Activated naive CD4-positive, alpha-beta T cell treated with anti-CD3 and anti-CD28 coated beads for 36 hours (primary cell): ENCODE measurements at regions of chr11 and their contacts with region 1.

Region 1: GRCh38 chr11:119741369-119742262 is 12.6 kb upstream of the NECTIN1 start:
- DNase-seq: peak; percentile 64
- H3K4me3 Mint-ChIP-seq: peak overlapping the region; percentile 30
- H3K27ac Mint-ChIP-seq: no peak overlapping the region
- H3K4me1 Mint-ChIP-seq: peaks cover 11% of the 10 kb centered on the region
- H3K27me3 Mint-ChIP-seq: peaks cover 39% of the 10 kb centered on the region

Region 2: DNA sequence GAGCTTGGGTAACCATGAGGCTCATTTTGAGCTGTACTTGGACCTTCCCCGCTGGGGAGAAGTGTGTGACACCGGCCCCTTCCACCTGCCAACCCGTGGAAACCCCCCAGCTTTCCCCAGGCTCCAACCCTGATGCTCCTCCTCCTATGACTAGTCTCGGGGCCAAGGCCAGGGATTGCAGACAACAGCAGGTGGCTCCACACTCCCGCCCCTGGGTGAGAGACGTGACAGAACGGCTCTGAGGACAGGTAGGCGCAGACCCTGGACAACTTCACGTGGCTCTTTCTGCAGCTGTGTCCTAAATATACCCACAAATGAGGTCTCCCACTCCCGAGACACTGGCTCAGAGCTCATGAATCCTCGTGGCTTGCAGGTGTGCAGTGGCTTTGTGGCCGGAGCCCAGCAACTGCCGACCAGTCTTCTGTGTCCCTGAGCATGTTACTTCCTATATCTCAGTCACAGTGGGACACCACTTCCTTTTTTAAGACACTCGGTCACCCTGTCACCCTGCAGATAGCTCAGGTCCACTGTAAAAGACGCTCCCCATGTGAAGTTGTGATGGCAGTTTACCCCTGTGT is 67.8 kb before region 1 on chr11:
- CTCF ChIA-PET with region 1: interaction called, 3 read pairs
- intact Hi-C with region 1: loop called (anchors 1 kb)
- DNase-seq: peak; percentile 87
- H3K4me3 Mint-ChIP-seq: no peak overlapping the region
- H3K27ac Mint-ChIP-seq: no peak overlapping the region
- H3K4me1 Mint-ChIP-seq: peaks cover 9% of the 10 kb centered on the region
- H3K27me3 Mint-ChIP-seq: no peaks in the 10 kb centered on the region